Esophagus muscularis mucosa (tissue), 4 donors: ENCODE measurements at regions of chr3 and their contacts with region 1.

Region 1: DNA sequence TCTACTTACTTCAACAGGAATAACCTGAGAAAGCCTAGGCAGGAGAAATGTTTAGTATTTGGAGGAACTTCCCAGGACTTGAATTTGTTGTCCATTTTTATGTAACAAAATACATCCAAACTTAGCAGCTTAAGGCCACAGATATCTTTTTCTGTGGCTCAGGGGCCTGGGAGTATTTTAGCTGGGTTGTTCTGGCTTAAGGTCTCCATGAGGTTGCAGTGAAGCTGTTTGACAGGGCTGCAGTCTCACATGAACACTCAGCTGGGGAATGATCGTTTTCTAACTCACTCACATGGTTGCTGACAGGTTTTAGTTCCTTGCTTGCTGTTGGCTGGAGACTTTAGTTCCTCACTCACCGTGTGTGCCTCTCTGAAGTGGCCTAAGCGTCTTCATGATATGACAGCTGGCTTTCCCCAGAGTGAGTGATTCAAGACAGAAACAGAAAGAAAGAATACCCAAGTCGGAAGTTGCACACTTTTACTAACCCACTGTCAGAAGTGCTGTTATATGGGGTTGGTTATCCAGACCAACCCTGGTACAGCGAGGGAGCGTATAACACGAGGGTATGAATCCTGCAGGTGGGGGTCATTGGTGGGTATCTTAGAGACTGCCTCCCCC is 229.7 kb upstream of the TBL1XR1 start:
- DNase-seq: no peak
- H3K4me3 ChIP-seq: no peak overlapping the region
- H3K27ac ChIP-seq: no peak overlapping the region
- H3K4me1 ChIP-seq: peaks cover 0 to 14% (median 2%) of the 10 kb centered on the region in 4 donors
- H3K27me3 ChIP-seq: no peaks in the 10 kb centered on the region
- CTCF ChIP-seq: no peak
- EP300 ChIP-seq: no peak
- POLR2A ChIP-seq: no peak

Region 2: GRCh38 chr3:177378168-177378567 is 48.8 kb before region 1 on chr3:
- intact Hi-C with region 1: loop called (anchors 5 kb)
- DNase-seq: no peak
- H3K4me3 ChIP-seq: no peak overlapping the region
- H3K27ac ChIP-seq: no peak overlapping the region
- H3K4me1 ChIP-seq: peaks cover 0 to 12% (median 7%) of the 10 kb centered on the region in 4 donors
- H3K27me3 ChIP-seq: no peaks in the 10 kb centered on the region
- CTCF ChIP-seq: no peak
- EP300 ChIP-seq: no peak
- POLR2A ChIP-seq: no peak